PC-9 (cell line): ENCODE measurements at regions of chr5 and their contacts with region 1.

Region 1: DNA sequence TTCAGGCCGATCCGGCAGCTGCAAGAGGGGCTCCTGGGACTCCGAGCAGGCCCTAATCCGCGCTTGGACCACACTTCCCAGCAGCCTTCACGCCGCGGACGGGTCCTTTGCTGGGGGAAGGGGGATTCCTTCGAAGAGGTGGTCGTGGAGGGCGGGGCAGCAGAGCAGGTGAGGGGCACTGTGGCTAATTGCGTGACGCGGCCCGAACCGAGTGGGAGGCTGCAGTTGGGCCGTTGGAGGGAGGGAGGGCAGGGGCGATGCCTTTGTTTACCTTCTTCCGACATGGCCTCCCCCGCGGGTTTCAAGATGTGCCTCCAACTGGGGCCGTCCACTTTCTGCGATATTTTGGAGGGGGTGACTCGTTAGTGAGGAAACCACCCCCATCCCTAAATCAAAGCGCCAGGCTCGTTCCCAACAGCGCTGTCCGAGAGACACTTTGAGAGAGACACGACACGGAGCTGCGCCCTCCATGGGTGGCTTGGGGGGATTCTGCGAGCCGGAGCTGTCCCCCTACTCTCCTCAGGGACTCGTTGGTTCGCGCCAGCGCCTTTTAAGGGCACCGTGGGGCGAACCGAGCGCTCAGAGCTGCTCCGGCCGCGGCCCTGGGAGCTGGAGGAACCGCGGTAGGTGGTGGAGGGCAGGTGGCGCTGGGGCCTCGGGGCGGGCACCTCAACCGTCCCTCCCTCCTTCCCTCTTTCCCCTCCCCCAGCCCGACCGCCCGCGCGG is at the start of gene FAM53C:
- DNase-seq: peak; percentile 73 to 98
- H3K4me3 ChIP-seq: peak within 1 kb of the TSS; percentile 60
- H3K27ac ChIP-seq: peak within 1 kb of the TSS; percentile 90
- H3K4me1 ChIP-seq: peaks cover 9% of the 10 kb centered on the region
- H3K27me3 ChIP-seq: no peaks in the 10 kb centered on the region
- CTCF ChIP-seq: no peak
- total RNA-seq, gene FAM53C: 46.6 and 65.1 TPM in 2 replicates

Region 2: GRCh38 chr5:138369706-138370105 is 31.9 kb after region 1 on chr5:
- CTCF ChIA-PET with region 1: no interaction called
- POLR2A ChIA-PET with region 1: no interaction called
- intact Hi-C with region 1: no loop called
- DNase-seq: no peak
- H3K4me3 ChIP-seq: no peak overlapping the region
- H3K27ac ChIP-seq: no peak overlapping the region
- H3K4me1 ChIP-seq: no peaks in the 10 kb centered on the region
- H3K27me3 ChIP-seq: no peaks in the 10 kb centered on the region
- CTCF ChIP-seq: no peak

Region 3: GRCh38 chr5:139403787-139404483 is 1066.1 kb after region 1 on chr5 and contains the start of gene SPATA24:
- CTCF ChIA-PET with region 1: no interaction called
- POLR2A ChIA-PET with region 1: interaction called, 24 read pairs
- intact Hi-C with region 1: no loop called
- DNase-seq: peak; percentile 91 to 95
- H3K4me3 ChIP-seq: peak within 1 kb of the TSS; percentile 67
- H3K27ac ChIP-seq: peak within 1 kb of the TSS; percentile 78
- H3K4me1 ChIP-seq: peaks cover 15% of the 10 kb centered on the region
- H3K27me3 ChIP-seq: no peaks in the 10 kb centered on the region
- CTCF ChIP-seq: no peak
- total RNA-seq, gene SPATA24: 6.5 and 9.6 TPM in 2 replicates